ENCODE measurements at regions of chr15 and their contacts with region 1.

Region 1: GRCh38 chr15:90931737-90932659 is at the start of gene HDDC3:
- DNase-seq: peak; percentile 82 to 94
- H3K4me3 ChIP-seq: peak within 1 kb of the TSS; percentile 69 to 81
- H3K27ac ChIP-seq: peak within 1 kb of the TSS; percentile 87 to 96
- H3K4me1 ChIP-seq: peaks cover 0 to 55% (median 40%) of the 10 kb centered on the region in 4 donors
- H3K27me3 ChIP-seq: no peaks in the 10 kb centered on the region
- CTCF ChIP-seq: peak; percentile 91 to 97

Region 2: GRCh38 chr15:90300988-90301706 is 630.9 kb before region 1 on chr15:
- intact Hi-C with region 1: no loop called
- DNase-seq: peak; percentile 57 to 90
- H3K4me3 ChIP-seq: no peak overlapping the region
- H3K27ac ChIP-seq: peak overlapping the region; percentile 81 to 87
- H3K4me1 ChIP-seq: peaks cover 0 to 90% (median 30%) of the 10 kb centered on the region in 4 donors
- H3K27me3 ChIP-seq: no peaks in the 10 kb centered on the region
- CTCF ChIP-seq: peak; percentile 80 to 84

Region 3: GRCh38 chr15:90497912-90498311 is 434.1 kb before region 1 on chr15:
- intact Hi-C with region 1: no loop called
- DNase-seq: no peak
- H3K4me3 ChIP-seq: no peak overlapping the region
- H3K27ac ChIP-seq: no peak overlapping the region
- H3K4me1 ChIP-seq: no peaks in the 10 kb centered on the region
- H3K27me3 ChIP-seq: no peaks in the 10 kb centered on the region
- CTCF ChIP-seq: no peak

Region 4: DNA sequence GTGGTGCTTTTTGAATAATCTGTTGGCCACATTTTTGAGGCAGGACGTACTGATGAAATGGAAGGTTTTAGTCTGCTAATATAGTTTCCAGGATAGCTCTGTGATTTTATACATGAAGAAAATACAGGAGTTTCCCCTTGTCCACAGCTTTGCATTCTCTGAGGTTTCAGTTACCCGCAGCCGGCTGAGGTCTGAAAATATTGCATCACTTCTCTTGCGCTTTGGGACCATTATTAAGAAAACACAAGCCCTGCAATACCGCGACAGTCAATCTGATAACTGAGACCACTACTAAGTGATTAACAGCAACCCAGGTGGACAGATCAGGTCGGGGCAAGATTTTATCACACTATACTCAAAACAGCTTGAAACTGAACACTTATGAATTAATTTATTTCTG is 181.8 kb before region 1 on chr15:
- intact Hi-C with region 1: no loop called
- DNase-seq: no peak
- H3K4me3 ChIP-seq: no peak overlapping the region
- H3K27ac ChIP-seq: no peak overlapping the region
- H3K4me1 ChIP-seq: no peaks in the 10 kb centered on the region
- H3K27me3 ChIP-seq: no peaks in the 10 kb centered on the region
- CTCF ChIP-seq: no peak

Region 5: DNA sequence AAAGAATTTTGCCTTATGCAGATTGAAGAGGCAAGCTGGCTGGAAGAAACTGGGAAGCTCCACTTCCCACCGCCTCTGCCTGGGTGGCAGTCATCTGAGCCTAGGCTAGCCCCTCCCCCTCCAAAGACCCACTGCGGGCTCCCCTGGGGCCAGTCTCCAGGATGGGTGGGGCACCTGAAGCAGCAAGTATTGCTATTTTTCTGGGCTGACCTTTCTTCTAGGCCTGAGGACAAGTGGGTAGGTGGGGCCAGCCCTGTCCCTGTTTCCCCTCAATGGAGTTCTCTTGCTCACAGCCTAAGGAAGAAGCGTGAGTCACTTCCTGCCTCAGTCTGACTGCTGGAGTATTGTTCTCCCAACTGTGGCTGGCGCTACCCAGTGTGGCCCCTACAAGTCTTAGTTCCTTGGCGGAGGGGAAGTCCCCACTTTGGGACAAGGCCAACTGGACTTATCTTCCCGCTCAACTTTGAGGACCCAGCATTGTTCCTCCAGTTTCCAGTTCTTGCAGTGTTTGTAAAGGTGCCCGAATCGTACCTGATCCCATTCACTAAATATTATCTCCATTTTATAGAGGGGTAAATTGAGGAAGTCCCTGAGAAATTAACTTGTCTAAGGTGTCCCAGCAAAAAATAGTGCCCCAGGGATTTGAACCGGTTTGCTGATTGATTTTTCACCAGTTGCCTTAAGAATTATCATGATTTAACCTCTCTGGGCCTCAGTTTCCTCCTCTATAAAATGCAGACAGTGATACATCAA is 62.2 kb before region 1 on chr15:
- intact Hi-C with region 1: loop called (anchors 5 kb)
- DNase-seq: peak; percentile 85 to 90
- H3K4me3 ChIP-seq: peak overlapping the region in 1 of 2 donors; percentile 87
- H3K27ac ChIP-seq: peak overlapping the region; percentile 97 to 98
- H3K4me1 ChIP-seq: peaks cover 0 to 45% (median 41%) of the 10 kb centered on the region in 4 donors
- H3K27me3 ChIP-seq: no peaks in the 10 kb centered on the region
- CTCF ChIP-seq: no peak

Region 6: DNA sequence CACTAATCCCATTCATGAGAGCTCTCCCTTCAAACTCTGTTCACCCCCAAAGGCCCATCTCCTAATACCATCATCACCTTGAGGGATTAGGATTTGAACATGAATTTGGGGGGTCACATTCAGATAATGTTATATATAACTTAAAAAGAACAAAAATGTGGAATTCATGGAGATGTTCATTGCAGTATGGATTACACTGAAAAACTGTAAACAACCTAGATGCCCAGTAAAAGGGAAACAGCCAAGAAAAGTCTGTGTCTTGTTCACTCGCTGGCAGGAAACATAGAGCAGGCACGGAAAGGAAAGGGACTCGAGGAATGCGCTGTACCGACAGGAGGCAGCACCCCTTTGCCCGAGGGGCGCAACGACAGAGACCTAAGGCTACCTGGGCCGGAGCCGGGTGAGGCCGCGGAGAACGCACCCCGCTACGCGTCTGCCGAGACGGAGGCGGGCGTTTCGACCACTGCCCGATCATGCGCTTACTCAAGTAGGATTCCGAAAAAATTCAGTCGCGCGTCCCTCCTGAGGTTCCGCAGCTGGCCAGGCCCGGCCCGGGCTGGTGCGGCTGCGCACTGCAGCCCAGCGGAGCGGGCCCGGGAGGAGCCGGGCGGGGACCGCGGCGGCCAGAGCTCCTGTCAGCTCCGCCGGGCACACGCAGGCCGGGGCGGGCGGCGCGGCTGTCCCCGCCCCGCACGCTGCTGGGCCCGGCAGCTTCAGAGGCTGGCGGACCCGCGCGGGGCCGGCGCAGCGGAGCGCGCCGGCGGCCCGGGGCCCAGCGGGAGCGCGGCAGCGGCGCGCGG is 29.8 kb before region 1 on chr15:
- intact Hi-C with region 1: loop called (anchors 2 kb)
- DNase-seq: peak; percentile 63 to 87
- H3K4me3 ChIP-seq: peak overlapping the region; percentile 65 to 90
- H3K27ac ChIP-seq: peak overlapping the region; percentile 91 to 94
- H3K4me1 ChIP-seq: peaks cover 0 to 22% (median 12%) of the 10 kb centered on the region in 4 donors
- H3K27me3 ChIP-seq: no peaks in the 10 kb centered on the region
- CTCF ChIP-seq: peak; percentile 64 to 79

Region 7: DNA sequence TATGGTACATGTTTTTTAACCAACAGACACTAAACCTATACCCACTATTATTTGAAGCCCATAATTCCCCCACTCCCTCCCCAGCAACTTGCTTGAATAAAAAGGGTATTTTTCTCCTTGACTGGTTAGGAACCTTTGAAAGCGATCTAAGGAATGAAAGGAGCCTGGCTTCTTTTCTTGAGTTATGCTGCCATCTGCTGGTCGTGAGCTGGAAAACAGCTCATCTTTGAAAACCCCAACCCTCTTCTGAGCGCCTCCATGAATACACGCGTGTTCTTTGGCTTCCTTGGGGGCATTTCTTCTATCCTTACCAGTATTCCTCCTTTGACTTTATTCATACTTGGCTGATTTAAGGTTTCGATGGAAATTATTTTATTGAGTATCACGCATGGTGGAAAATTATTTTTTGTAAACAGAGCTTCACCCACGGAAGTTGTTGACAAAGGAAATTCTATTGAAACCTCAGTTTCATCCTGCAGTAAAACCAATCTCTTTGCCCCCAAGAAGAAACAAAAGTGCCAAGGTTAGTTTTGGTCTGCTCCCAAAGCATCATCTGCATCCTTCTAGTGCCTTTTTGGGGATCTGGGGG is 339.7 kb after region 1 on chr15:
- intact Hi-C with region 1: loop called (anchors 10 kb)
- DNase-seq: peak in 1 of 2 donors; percentile 42
- H3K4me3 ChIP-seq: no peak overlapping the region
- H3K27ac ChIP-seq: no peak overlapping the region
- H3K4me1 ChIP-seq: no peaks in the 10 kb centered on the region
- H3K27me3 ChIP-seq: peaks cover 0 to 6% of the 10 kb centered on the region in 2 donors
- CTCF ChIP-seq: peak; percentile 80 to 85